ENCODE measurements at regions of chr19 and their contacts with region 1.

Region 1: GRCh38 chr19:4669723-4670480 is at the start of gene MYDGF:
- DNase-seq: peak; percentile 80
- H3K4me3 ChIP-seq: peak within 1 kb of the TSS; percentile 74 to 97 (median 80)
- H3K27ac ChIP-seq: peak within 1 kb of the TSS; percentile 44
- H3K4me1 ChIP-seq: peaks cover 13% of the 10 kb centered on the region
- H3K27me3 ChIP-seq: no peaks in the 10 kb centered on the region
- CTCF ChIP-seq: no peak
- POLR2A ChIP-seq: peak; percentile 80
- total RNA-seq, gene MYDGF: 187 and 191 TPM in 2 replicates

Region 2: GRCh38 chr19:4682417-4683200 is 12.7 kb after region 1 on chr19:
- CTCF ChIA-PET with region 1: no interaction called
- POLR2A ChIA-PET with region 1: no interaction called
- dilution Hi-C with region 1: no loop called
- intact Hi-C with region 1: no loop called
- DNase-seq: no peak
- H3K4me3 ChIP-seq: no peak overlapping the region
- H3K27ac ChIP-seq: no peak overlapping the region
- H3K4me1 ChIP-seq: no peaks in the 10 kb centered on the region
- H3K27me3 ChIP-seq: no peaks in the 10 kb centered on the region
- CTCF ChIP-seq: no peak
- POLR2A ChIP-seq: no peak

Region 3: GRCh38 chr19:4968462-4969291 is 298.8 kb after region 1 on chr19 and contains the start of gene KDM4B:
- CTCF ChIA-PET with region 1: no interaction called
- POLR2A ChIA-PET with region 1: no interaction called
- dilution Hi-C with region 1: no loop called
- intact Hi-C with region 1: loop called (anchors 5 kb)
- DNase-seq: peak; percentile 100
- H3K4me3 ChIP-seq: peak within 1 kb of the TSS; percentile 45 to 54 (median 48)
- H3K27ac ChIP-seq: no peak within 1 kb of the TSS
- H3K4me1 ChIP-seq: peaks cover 23% of the 10 kb centered on the region
- H3K27me3 ChIP-seq: no peaks in the 10 kb centered on the region
- CTCF ChIP-seq: no peak
- POLR2A ChIP-seq: peak; percentile 85
- total RNA-seq, gene KDM4B: 30.8 and 37.2 TPM in 2 replicates

Measured in endothelial cell of umbilical vein (primary cell).